ENCODE measurements at regions of chr9 and their contacts with region 1.

Region 1: GRCh38 chr9:5586391-5586802 is 42.5 kb upstream of the RIC1 start:
- DNase-seq: no peak
- H3K4me3 ChIP-seq: no peak overlapping the region
- H3K27ac ChIP-seq: no peak overlapping the region
- H3K4me1 ChIP-seq: no peaks in the 10 kb centered on the region
- H3K27me3 ChIP-seq: no peaks in the 10 kb centered on the region
- CTCF ChIP-seq: no peak

Region 2: DNA sequence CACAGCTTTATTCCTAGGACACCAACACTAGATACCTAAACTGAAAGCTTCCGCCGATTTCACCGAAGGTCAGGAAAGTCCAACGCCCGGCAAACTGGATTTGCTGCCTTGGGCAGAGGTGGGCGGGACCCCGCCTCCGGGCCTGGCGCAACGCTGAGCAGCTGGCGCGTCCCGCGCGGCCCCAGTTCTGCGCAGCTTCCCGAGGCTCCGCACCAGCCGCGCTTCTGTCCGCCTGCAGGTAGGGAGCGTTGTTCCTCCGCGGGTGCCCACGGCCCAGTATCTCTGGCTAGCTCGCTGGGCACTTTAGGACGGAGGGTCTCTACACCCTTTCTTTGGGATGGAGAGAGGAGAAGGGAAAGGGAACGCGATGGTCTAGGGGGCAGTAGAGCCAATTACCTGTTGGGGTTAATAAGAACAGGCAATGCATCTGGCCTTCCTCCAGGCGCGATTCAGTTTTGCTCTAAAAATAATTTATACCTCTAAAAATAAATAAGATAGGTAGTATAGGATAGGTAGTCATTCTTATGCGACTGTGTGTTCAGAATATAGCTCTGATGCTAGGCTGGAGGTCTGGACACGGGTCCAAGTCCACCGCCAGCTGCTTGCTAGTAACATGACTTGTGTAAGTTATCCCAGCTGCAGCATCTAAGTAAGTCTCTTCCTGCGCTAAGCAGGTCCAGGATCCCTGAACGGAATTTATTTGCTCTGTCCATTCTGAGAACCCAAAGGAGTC is 135.9 kb before region 1 on chr9 and contains the start of gene CD274:
- intact Hi-C with region 1: loop called (anchors 5 kb)
- DNase-seq: peak; percentile 94
- H3K4me3 ChIP-seq: peak within 1 kb of the TSS; percentile 49
- H3K27ac ChIP-seq: peak within 1 kb of the TSS; percentile 94
- H3K4me1 ChIP-seq: no peaks in the 10 kb centered on the region
- H3K27me3 ChIP-seq: no peaks in the 10 kb centered on the region
- CTCF ChIP-seq: peak; percentile 61
- total RNA-seq, gene CD274: 1.6 to 2.0 TPM

Region 3: GRCh38 chr9:5721279-5722087 is 135.1 kb after region 1 on chr9:
- intact Hi-C with region 1: no loop called
- DNase-seq: no peak
- H3K4me3 ChIP-seq: no peak overlapping the region
- H3K27ac ChIP-seq: no peak overlapping the region
- H3K4me1 ChIP-seq: no peaks in the 10 kb centered on the region
- H3K27me3 ChIP-seq: no peaks in the 10 kb centered on the region
- CTCF ChIP-seq: no peak

Measured in colonic mucosa (tissue), 4 donors.